ENCODE measurements at regions of chr19 and their contacts with region 1.

Region 1: DNA sequence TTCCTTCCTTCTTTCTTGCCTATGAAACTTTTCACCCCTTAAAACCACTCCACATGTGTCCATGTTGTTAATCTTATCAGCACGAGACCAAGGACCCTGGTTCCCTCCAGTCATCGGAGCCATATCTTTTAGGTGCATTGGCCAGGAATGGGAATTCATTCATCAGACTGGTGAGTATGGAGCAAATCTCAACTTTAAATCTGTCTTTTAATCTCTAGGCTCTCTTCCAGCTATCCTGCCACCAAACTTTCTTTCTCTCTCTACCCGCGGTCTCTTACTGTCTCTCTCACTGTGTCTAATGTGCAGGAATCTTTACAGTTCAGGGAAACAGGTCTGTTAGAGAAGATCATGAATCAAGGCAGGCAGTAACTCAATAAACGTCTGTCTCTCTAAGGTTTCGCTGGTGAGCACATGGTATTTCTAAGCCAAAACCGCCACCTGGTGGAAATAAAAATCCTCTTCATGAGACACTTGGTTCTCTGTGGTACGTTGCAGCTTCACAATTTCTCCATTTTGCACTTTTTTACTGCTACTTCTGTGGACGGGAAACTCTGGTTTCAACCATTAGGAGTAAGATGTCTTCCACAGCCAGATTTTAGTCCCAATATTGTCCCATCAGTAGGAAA is 16.1 kb downstream of the LGALS16 start:
- ATAC-seq: peak in 4 of 8 experiments; percentile 54 to 94 (median 92)
- H3K4me3 ChIP-seq: no peak overlapping the region
- H3K27ac ChIP-seq: no peak overlapping the region
- H3K4me1 ChIP-seq: no peaks in the 10 kb centered on the region

Region 2: GRCh38 chr19:39557441-39558151 is 114.3 kb before region 1 on chr19:
- in situ Hi-C with region 1: loop called in 3 of 9 experiments (anchors 25 kb)
- ATAC-seq: peak in 4 of 8 experiments; percentile 44 to 98 (median 86)
- H3K4me3 ChIP-seq: no peak overlapping the region
- H3K27ac ChIP-seq: no peak overlapping the region
- H3K4me1 ChIP-seq: no peaks in the 10 kb centered on the region